ENCODE measurements at regions of chr21 and their contacts with region 1.

Region 1: DNA sequence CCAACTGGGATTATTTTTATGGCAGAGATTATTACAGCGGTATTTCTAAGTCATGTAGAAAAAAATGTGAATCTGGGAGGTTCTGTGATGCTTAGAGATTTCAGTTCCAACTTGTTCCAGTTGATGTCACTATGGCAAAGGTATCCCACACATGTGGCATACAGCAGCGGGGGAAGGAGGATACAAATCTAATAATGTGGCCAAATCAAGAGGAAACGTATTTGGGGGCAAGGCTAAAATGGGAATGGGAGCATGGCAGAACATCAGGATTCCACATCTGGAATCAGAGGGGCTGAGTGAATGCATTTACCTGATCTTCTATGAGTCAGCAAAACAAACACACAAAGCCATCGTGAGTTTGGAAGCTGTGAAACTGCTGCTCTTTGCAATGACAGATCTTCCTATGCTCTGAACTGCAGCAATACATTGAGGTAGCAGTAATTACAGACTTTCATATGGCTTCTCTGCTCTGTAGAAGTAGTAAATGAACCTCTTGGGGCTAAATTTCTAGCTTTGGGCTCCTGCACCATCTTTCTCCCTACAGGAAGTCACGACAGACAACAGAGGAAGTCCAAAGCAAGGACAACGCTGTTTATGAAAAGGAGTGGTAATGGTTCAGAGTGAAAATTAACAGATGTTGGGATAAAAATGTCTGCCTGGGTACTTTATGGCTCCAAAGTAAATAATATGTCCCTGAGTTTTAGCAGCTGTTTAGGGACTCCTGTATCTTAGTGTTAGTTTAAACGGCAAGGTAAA is 55.5 kb downstream of the GABPA start:
- DNase-seq: no peak
- ATAC-seq: peak; percentile 65 to 67

Region 2: DNA sequence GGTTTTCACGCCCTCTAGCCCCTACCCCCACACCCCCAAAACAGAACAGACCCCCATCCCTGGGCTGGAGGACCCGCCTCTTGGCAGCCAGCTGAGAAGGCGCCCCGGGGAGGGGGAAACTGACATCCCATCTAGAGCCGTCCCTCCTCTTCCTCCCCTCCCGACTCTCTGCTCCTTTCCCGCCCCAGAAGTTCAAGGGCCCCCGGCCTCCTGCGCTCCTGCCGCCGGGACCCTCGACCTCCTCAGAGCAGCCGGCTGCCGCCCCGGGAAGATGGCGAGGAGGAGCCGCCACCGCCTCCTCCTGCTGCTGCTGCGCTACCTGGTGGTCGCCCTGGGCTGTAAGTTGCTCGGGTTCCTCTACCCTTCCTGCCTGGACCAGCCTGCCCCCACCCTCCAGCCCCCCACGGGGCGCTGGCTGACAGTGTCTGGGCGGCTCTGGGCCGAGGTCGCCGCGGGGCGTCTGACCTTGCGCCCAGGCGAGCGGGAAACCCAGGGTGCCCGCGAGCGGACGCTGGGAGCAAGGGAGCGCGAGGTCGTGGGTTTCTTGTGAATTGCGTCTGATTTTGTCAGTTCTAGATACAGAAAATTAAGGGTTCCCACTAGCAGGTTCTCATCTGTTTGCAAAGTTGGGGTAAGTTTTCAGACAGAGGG is 150.6 kb before region 1 on chr21:
- intact Hi-C with region 1: no loop called
- DNase-seq: peak; percentile 61
- ATAC-seq: peak; percentile 83 to 90

Region 3: GRCh38 chr21:26715878-26716506 is 925.7 kb after region 1 on chr21:
- intact Hi-C with region 1: loop called in 1 of 2 experiments (anchors 10 kb)
- DNase-seq: peak; percentile 33
- ATAC-seq: peak; percentile 51 to 76

Measured in left cardiac atrium (tissue), 4 donors.